HepG2 (cell line): ENCODE measurements at regions of chr9 and their contacts with region 1.

Region 1: DNA sequence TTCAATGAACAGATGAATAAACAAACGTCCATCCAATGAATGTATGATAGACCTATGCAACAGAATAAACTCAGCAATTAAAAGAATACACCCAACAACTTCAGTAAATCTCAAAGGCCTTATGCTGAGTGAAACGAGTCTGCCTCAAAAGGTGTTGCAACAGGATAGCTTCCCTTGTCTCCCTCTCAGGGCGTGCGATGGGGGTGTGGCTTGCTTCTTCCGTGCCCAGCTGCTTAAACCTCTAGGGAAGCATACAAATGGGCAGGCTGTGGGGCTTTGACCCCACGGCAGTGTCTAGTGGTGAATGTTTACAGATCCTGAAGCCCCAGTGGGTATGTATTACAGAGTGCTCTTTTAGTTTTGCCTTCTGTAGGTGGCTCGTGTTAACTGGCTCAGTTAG is 87.0 kb upstream of the CCL21 start:
- DNase-seq: no peak
- ATAC-seq: no peak
- H3K4me3 ChIP-seq: no peak overlapping the region
- H3K27ac ChIP-seq: no peak overlapping the region
- H3K4me1 ChIP-seq: no peaks in the 10 kb centered on the region
- H3K27me3 ChIP-seq: no peaks in the 10 kb centered on the region
- CTCF ChIP-seq: no peak
- EP300 ChIP-seq: no peak
- POLR2A ChIP-seq: no peak
- RAD21 ChIP-seq: no peak

Region 2: GRCh38 chr9:34717996-34718614 is 78.8 kb before region 1 on chr9:
- CTCF ChIA-PET with region 1: no interaction called
- POLR2A ChIA-PET with region 1: no interaction called
- in situ Hi-C with region 1: no loop called
- intact Hi-C with region 1: loop called (anchors 2 kb)
- DNase-seq: no peak
- ATAC-seq: peak; percentile 76
- H3K4me3 ChIP-seq: no peak overlapping the region
- H3K27ac ChIP-seq: no peak overlapping the region
- H3K4me1 ChIP-seq: peaks cover 9% of the 10 kb centered on the region; the same call in 1 of the 2 replicates
- H3K27me3 ChIP-seq: peaks cover 0 to 5% of the 10 kb centered on the region in 2 experiments; a peak in 3 of 5 replicates
- CTCF ChIP-seq: no peak
- EP300 ChIP-seq: no peak
- POLR2A ChIP-seq: no peak
- RAD21 ChIP-seq: no peak

Region 3: GRCh38 chr9:34876096-34876495 is 79.2 kb after region 1 on chr9:
- CTCF ChIA-PET with region 1: no interaction called
- POLR2A ChIA-PET with region 1: no interaction called
- in situ Hi-C with region 1: no loop called
- intact Hi-C with region 1: no loop called
- DNase-seq: no peak
- ATAC-seq: no peak
- H3K4me3 ChIP-seq: no peak overlapping the region
- H3K27ac ChIP-seq: no peak overlapping the region
- H3K4me1 ChIP-seq: no peaks in the 10 kb centered on the region
- H3K27me3 ChIP-seq: 0 out of 5 replicates have a peak, but pooled peaks cover 0 to 1% of the 10 kb centered on the region in 2 experiments
- CTCF ChIP-seq: no peak
- EP300 ChIP-seq: no peak
- POLR2A ChIP-seq: no peak
- RAD21 ChIP-seq: no peak